Aorta (tissue), 5 donors: ENCODE measurements at regions of chr6 and their contacts with region 1.

Region 1: GRCh38 chr6:149431905-149432775 is 32.1 kb downstream of the SUMO4 start:
- DNase-seq: peak; percentile 93 to 96
- ATAC-seq: peak; percentile 92
- H3K4me3 ChIP-seq: no peak overlapping the region
- H3K27ac ChIP-seq: no peak overlapping the region
- H3K4me1 ChIP-seq: no peaks in the 10 kb centered on the region
- H3K27me3 ChIP-seq: no peaks in the 10 kb centered on the region

Region 2: DNA sequence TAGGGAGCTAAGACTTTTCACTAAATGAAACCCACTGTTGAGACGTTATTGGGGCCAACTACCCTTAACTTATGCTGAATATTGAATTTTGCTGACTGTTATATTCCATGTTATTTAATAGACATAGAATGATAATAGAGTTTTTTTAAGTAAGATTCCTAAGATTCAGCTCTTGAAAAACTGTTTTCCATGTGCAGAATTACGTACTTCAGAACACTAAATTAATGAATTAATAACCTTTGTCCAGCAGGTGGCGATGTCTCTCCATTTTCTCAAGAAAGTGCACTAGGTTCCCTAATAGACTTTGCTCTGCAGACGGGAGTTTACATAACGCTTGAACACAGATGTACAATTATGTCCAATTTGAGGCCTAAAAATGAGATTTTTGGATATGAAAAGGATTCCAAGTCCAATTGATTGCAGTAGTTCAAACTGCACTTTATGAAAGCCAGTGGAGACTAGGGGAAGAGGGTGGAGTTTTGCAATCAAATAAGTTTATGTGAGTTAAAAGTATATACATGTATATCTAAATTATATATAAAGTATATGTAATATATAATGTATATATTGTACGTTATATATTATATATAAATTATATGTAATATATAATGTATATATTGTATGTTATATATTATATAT is 403.3 kb before region 1 on chr6:
- intact Hi-C with region 1: loop called (anchors 2 to 5 kb)
- DNase-seq: peak in 1 of 2 donors; percentile 62
- ATAC-seq: peak; percentile 83
- H3K4me3 ChIP-seq: no peak overlapping the region
- H3K27ac ChIP-seq: no peak overlapping the region
- H3K4me1 ChIP-seq: peaks cover 0 to 3% of the 10 kb centered on the region in 2 donors
- H3K27me3 ChIP-seq: no peaks in the 10 kb centered on the region

Region 3: DNA sequence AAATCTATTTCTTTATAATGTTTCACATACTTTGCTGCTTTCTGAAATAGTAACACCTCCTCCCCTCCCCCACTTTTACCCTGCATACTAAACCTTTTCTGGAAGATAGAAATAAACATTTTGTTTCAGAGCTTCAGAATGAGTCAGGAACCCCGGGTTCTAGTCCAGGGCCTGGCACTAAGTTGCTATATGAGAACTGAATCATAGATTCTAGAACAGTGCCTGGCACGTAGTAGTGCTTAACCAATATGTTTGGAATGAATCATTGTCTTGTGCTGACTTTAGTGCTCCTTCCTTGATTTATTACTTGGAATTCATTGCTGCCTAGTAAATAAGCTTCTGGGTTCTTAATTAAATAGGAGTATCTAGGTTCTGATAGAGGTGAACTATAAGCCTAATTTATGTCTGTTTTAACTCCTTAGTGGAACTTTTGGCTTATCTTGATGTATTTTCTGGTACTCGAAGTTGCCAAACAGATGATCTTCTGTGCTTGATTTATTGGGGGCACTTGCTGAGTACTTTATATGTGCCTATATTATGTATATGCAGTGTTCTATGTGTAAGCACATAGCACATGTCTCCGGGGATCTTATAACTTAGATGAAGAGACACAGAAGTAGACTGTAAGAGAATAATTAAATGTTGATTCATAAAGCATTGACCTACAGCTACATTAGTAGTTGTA is 96.1 kb before region 1 on chr6:
- intact Hi-C with region 1: no loop called
- DNase-seq: peak in 1 of 2 donors; percentile 53
- ATAC-seq: no peak
- H3K4me3 ChIP-seq: no peak overlapping the region
- H3K27ac ChIP-seq: no peak overlapping the region
- H3K4me1 ChIP-seq: peaks cover 0 to 29% of the 10 kb centered on the region in 2 donors
- H3K27me3 ChIP-seq: no peaks in the 10 kb centered on the region

Region 4: DNA sequence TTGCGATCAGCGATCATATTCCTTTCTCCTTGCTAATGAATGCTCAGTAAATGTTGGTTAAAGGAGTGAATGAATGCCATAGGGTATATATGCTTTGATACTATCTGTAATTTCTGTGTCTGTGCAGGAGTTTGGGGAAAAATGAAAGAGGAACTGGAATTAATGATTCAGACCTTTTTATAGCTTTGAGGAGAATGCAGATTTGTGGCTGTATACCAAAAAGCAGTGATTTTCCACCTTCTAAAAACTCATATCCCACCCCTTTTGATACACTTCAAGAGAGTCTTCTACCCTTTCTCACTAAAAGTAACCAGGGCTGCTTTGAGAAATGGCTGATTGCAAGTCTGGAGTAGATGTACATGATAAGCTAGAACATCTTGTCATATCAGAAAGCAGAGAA is 58.6 kb before region 1 on chr6:
- intact Hi-C with region 1: no loop called
- DNase-seq: no peak
- ATAC-seq: no peak
- H3K4me3 ChIP-seq: no peak overlapping the region
- H3K27ac ChIP-seq: no peak overlapping the region
- H3K4me1 ChIP-seq: peaks cover 2 to 6% of the 10 kb centered on the region in 2 donors
- H3K27me3 ChIP-seq: no peaks in the 10 kb centered on the region

Region 5: DNA sequence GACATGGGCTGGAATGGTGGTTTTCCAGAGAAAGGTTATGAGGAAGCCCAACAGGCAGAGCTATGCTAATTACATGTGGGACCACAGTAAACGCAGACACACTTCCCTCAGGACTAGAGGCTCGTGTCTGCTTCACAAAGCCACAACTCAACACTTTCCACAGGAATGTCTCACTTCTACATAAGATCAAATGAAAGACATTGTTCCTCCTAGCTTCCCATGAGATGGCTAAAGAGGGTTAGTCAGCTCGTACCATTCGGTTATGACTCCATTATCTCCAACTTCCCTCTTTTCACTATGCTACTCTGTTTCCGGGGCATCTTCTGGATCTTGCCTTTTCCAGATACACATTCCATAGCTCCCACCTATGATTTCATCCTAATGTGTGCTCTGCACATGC is 81.8 kb after region 1 on chr6:
- intact Hi-C with region 1: loop called in 1 of 2 experiments (anchors 5 kb)
- DNase-seq: no peak
- ATAC-seq: no peak
- H3K4me3 ChIP-seq: no peak overlapping the region
- H3K27ac ChIP-seq: no peak overlapping the region
- H3K4me1 ChIP-seq: no peaks in the 10 kb centered on the region
- H3K27me3 ChIP-seq: no peaks in the 10 kb centered on the region

Region 6: DNA sequence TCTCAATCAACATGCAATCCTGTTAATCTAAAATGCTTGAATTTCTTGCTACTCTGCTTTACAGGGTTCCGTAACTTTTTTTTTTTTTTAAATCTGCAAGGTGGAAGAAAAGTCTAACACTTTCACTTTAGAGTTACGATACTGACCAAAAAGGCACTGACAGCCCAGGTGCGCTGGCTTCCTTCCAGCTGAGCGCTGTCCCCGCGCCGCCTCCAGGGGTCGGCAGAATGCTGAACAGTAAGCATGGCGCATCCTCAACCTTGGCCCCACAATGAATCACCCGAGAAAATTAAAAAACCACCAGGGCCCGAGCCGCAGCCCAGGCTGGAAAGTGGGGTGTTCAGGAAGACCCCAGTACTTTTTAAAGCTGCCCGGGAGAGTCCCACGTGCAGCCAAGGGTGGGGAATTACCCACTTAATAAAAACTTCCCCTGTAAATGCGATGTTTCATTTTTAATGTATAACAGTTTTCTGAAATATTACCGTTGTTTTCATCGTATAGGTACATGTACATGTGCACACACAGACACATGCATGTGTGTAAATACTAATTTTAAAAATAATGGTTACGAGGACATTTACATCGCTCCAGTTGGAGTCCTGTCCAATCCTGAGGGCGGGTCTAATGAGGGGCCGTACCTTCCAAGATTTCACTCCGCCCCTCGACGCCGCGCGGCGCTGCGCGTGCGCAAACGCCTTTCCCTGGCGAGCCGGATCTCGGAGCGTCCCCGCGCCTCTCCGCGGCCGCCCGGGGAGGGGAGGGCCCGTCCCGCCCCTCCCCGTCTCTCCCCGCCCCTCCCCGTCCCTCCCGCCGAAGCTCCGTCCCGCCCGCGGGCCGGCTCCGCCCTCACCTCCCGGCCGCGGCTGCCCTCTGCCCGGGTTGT is 133.6 kb after region 1 on chr6 and contains the start of gene GINM1:
- intact Hi-C with region 1: no loop called
- DNase-seq: peak; percentile 95 to 99
- ATAC-seq: peak; percentile 98
- H3K4me3 ChIP-seq: peak within 1 kb of the TSS; percentile 89 to 96
- H3K27ac ChIP-seq: peak within 1 kb of the TSS; percentile 64 to 89
- H3K4me1 ChIP-seq: peaks cover 1 to 3% of the 10 kb centered on the region in 2 donors
- H3K27me3 ChIP-seq: no peaks in the 10 kb centered on the region
- total RNA-seq, gene GINM1: 67.2 to 68.1 TPM